ENCODE measurements at regions of chr3 and their contacts with region 1.

Region 1: GRCh38 chr3:54773271-54773670 is 154.6 kb downstream of the LRTM1 start:
- DNase-seq: no peak
- ATAC-seq: no peak
- H3K4me3 ChIP-seq: no peak overlapping the region
- H3K27ac ChIP-seq: no peak overlapping the region
- H3K4me1 ChIP-seq: no peaks in the 10 kb centered on the region
- H3K27me3 ChIP-seq: no peaks in the 10 kb centered on the region
- CTCF ChIP-seq: no peak

Region 2: DNA sequence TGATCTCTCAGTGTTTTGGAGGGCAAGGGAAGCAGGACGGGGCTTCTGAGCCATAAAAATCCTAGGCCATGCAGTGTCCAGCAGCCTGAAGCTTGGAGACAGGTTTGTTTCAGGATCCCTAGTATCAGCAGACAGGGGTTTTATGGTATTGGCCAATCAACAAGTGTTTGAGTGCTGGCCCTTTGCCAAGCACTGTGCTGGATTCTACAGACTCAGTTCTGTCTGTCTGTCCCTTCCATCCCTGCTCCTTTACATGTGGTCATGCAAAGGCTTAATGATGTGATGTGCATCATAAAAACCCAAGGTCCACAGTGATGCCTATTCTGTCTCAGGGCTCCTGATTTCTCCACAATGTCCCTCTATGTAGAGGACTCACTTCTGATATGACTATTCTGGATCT is 29.5 kb before region 1 on chr3:
- intact Hi-C with region 1: loop called in 1 of 10 experiments (anchors 2 kb)
- DNase-seq: no peak
- ATAC-seq: no peak
- H3K4me3 ChIP-seq: no peak overlapping the region
- H3K27ac ChIP-seq: no peak overlapping the region
- H3K4me1 ChIP-seq: no peaks in the 10 kb centered on the region
- H3K27me3 ChIP-seq: no peaks in the 10 kb centered on the region
- CTCF ChIP-seq: no peak

Measured in heart right ventricle (tissue), 16 donors.